ENCODE measurements at regions of chr9 and their contacts with region 1.

Region 1: DNA sequence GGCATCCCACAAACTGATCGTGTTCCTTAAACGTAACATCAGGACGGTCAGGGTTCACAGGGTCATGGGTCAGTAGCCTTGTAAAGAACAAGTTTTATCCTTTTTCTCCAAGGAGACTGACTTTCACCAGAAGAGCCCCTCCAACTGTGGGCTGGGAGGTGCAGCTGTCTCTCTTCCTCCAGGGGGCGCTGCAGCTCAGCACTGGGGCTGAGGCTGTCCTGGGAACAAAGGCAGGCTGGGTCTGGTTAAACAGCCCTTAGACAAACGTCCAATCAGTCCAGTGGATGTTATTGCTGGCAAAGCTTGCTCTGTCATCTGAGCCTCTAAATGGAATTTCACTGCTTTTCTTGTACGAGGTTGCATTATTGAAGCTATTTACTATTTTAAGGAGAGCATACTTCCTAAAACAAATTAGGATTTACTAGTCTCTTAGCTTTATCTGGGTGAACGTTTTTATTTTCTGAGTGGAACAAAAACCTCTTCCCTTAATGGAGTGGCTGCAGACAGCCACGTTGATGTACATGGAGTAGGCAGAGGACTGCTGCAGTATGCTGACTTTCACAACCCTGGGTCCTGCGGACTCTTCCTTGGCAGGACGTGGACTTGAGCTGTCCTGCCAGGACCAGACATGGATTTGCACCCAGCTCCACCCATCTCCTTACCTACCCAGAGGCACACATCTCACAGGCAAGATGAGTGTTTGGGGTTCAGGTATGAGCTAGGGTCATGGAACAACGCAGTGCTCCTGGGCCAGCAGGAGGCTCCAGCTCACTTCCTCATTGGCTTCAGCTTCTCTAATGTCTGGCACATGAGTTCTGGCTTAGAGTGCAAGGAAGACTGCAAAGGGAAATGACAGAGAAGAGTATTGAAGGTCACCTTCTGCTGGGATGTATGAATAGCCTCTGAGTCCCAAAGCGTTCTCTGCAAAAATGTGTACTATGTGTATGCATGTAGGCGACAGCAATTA is 7.8 kb downstream of the EXOSC2 start:
- DNase-seq: peak; percentile 55
- CTCF ChIP-seq: peak; percentile 80

Region 2: GRCh38 chr9:130940693-130941576 is 239.6 kb after region 1 on chr9:
- in situ Hi-C with region 1: loop called (anchors 10 kb)
- DNase-seq: peak; percentile 90
- CTCF ChIP-seq: peak; percentile 94

Region 3: DNA sequence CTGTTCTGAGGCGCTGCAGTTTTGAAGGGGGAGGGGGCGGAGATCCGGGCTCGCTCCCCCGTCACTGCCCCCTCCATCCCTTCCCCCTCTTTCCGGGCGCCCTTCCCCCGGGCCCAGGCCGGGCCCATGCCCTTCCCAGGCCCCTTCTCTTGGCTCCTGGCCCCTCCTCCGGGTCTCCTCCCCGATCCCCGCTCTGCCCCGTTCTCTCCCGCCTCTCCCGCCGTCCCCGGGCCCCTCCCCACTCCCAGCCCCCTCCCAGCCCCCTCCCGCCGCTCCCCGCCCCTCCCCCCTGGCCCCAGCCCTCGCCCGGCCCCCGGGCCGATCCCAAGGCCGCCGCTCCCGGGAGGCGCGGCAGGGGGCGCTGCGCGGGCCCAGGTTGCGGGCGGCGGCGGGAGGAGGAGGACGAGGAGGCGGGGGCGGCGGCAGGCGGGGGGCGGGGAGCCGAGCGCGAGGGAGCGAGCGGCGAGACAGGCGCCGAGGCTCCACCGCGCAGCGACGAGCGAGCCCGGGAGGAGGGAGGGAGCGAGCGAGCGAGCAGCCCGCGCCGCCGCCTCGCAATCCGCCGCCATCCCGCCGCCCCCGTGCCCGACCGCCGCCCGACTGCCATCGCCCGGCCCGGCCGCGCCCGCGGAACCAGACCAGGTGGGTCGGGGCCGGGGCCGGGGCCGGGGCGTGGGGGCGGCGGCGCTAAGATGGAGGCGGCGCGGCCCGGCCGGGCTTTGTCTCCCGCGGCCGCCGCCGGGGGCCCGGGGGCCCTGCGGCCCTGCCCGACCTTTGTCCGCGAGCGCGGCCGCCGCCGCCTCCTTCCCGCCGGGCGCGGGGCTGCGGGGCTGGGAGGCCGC is 692.5 kb after region 1 on chr9 and contains the start of gene PRRC2B:
- in situ Hi-C with region 1: no loop called
- DNase-seq: peak; percentile 95
- CTCF ChIP-seq: peak; percentile 86

Measured in GM13976 (cell line).